Mucosa of descending colon (tissue), 3 donors: ENCODE measurements at regions of chr10 and their contacts with region 1.

Region 1: GRCh38 chr10:44857363-44858016 is 53.6 kb upstream of the TMEM72 start:
- DNase-seq: peak in 2 of 3 donors; percentile 71 to 73
- ATAC-seq: peak; percentile 77
- H3K4me3 ChIP-seq: no peak overlapping the region
- H3K4me1 ChIP-seq: no peaks in the 10 kb centered on the region
- CTCF ChIP-seq: peak; percentile 94

Region 2: DNA sequence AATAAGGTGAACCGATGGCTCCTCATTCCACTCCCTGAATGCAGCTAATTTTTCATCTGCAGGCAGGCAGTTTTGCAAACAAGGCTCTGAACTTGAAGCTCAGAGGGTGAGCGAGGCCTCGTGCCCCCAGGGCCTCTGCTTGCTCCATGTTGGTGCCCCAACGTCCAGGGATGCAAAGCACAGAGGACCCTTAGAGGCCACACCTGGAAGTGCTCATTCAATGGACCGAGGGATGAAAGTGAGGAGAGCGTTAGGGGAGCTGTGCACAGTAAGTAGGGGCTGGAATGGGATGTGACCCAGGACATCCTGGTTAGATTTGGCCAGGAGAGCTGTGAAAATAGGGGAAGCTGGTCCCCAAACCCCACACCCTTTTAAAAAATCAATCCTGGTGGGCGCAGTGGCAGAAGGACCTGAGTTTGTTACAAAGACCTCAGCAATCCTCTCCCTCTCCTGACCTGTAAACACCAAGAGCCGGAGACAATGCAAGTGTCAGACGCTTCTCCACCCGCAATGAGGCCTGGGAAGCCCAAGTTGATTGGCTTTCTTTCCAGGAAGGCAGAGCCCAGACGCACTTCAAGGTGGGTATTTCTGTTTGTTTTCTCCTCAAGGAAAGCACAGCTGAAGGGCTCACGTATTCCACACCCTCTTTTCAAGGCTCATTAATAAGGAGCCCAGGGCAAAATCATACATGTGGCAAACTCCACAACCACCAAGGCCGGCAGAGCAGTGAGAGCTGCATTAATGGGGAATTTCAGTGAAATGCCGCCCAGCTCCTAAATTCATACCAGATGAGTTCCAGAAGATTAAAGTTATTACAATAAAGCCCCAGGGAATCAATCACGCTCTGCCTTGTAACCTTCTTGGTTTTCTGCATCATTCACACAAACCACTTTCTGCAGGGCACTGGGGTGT is 458.5 kb before region 1 on chr10:
- intact Hi-C with region 1: loop called in 1 of 2 experiments (anchors 10 kb)
- DNase-seq: no peak
- ATAC-seq: no peak
- H3K4me3 ChIP-seq: no peak overlapping the region
- H3K4me1 ChIP-seq: no peaks in the 10 kb centered on the region
- CTCF ChIP-seq: no peak